PC-9 (cell line): ENCODE measurements at regions of chr1 and their contacts with region 1.

Region 1: GRCh38 chr1:197526736-197527371 is 248.4 kb downstream of the DENND1B start:
- DNase-seq: peak in 1 of 2 experiments; percentile 34
- H3K4me3 ChIP-seq: no peak overlapping the region
- H3K27ac ChIP-seq: no peak overlapping the region
- H3K4me1 ChIP-seq: no peaks in the 10 kb centered on the region
- H3K27me3 ChIP-seq: no peaks in the 10 kb centered on the region
- CTCF ChIP-seq: peak; percentile 88

Region 2: DNA sequence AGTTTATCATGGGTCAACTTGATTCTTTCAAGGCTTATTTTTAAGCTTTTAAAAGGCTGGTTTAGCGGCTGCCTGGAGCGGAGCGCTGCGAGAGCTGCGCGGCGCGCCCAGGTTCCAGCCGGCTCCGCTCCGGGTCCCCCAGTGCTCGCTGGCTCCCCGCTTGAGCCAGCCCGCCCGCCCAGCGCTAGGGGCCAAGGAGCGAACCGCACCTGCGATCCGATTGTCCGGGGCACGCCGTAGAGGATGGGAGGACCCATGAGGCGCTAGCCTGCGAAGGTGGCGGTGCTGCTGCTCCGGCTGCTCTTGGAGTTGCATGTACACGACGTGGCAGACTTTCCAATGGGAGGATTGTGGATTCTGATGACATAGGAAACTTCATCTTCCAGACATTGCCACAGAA is 648.9 kb before region 1 on chr1:
- CTCF ChIA-PET with region 1: no interaction called
- POLR2A ChIA-PET with region 1: no interaction called
- intact Hi-C with region 1: no loop called
- DNase-seq: no peak
- H3K4me3 ChIP-seq: no peak overlapping the region
- H3K27ac ChIP-seq: no peak overlapping the region
- H3K4me1 ChIP-seq: no peaks in the 10 kb centered on the region
- H3K27me3 ChIP-seq: no peaks in the 10 kb centered on the region
- CTCF ChIP-seq: no peak

Region 3: GRCh38 chr1:197595304-197595904 is 68.5 kb after region 1 on chr1:
- CTCF ChIA-PET with region 1: no interaction called
- POLR2A ChIA-PET with region 1: no interaction called
- intact Hi-C with region 1: no loop called
- DNase-seq: no peak
- H3K4me3 ChIP-seq: no peak overlapping the region
- H3K27ac ChIP-seq: no peak overlapping the region
- H3K4me1 ChIP-seq: no peaks in the 10 kb centered on the region
- H3K27me3 ChIP-seq: no peaks in the 10 kb centered on the region
- CTCF ChIP-seq: no peak

Region 4: DNA sequence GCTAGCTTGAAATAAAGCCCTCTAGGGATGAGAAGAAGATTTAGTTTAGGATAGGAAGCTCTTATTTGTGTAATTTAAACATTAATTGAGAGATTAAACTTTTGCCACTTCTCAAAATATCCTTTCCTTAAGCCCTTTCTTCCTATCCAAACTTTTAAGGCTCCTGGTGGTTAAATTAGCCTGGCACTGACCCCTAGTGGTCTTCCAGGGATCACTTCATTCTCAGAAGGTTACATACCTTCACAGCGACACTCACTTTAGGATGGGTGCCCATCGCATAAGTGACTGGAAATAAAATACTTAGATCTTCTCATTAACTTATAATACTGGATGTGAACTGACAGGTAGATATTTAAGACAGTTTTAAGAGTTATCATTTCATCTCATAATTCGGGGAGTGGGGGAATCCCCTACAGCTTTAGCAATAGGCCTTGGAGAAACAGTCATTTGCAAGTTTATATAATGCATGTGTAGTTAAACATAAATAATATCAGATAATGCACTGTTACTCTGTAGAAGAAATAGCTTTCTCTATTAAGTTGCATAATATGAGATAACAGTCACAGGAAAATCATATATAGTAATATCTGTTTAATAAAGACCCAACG is 397.8 kb after region 1 on chr1:
- CTCF ChIA-PET with region 1: no interaction called
- POLR2A ChIA-PET with region 1: no interaction called
- intact Hi-C with region 1: loop called (anchors 5 kb)
- DNase-seq: peak in 1 of 2 experiments; percentile 18
- H3K4me3 ChIP-seq: no peak overlapping the region
- H3K27ac ChIP-seq: no peak overlapping the region
- H3K4me1 ChIP-seq: no peaks in the 10 kb centered on the region
- H3K27me3 ChIP-seq: no peaks in the 10 kb centered on the region
- CTCF ChIP-seq: peak; percentile 84